Activated CD4-positive, alpha-beta memory T cell treated with anti-CD3 and anti-CD28 coated beads, Interleukin-2, amount 10 ng/mL, durations not matched to agents 7 days and 5 days (primary cell): ENCODE measurements at regions of chr6 and their contacts with region 1.

Region 1: GRCh38 chr6:24899997-24900325 is 35.8 kb downstream of the RIPOR2 start:
- DNase-seq: peak; percentile 21
- H3K4me3 Mint-ChIP-seq: no peak overlapping the region
- H3K27ac Mint-ChIP-seq: peak overlapping the region; percentile 62
- H3K4me1 Mint-ChIP-seq: peaks cover 66% of the 10 kb centered on the region
- H3K27me3 Mint-ChIP-seq: no peaks in the 10 kb centered on the region

Region 2: DNA sequence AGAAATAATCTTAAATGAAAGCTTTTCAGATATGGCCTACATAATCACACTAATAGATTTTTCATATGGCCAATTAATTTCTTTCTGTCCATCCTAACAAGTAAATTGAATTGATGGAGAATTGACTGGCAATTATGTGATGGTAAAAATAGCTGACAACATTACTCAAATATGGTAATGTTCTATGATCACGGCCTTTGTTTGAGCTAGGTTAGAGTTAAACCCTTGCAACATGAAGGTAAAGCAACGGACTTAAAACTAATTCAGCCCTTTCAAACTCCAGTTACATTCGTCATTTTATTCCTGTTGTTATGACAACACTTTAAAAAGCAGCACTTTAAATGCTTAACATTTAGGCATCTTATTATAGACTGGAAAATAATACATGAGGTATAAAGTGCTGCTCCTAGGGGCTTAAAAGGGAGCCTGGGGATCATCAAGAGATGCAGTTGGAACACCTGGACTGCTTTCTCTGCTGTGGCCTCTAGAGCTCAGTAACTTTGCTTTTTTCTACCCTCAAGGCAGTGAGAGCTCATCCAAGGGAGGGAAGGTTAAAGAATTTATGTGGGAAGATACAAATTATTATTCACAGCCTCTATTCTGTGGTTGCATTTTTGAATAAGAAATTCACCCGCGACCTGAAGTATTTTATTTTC is 11.1 kb before region 1 on chr6:
- CTCF ChIA-PET with region 1: interaction called, 5 read pairs
- POLR2A ChIA-PET with region 1: interaction called, 21 read pairs
- DNase-seq: no peak
- H3K4me3 Mint-ChIP-seq: no peak overlapping the region
- H3K27ac Mint-ChIP-seq: no peak overlapping the region
- H3K4me1 Mint-ChIP-seq: peaks cover 66% of the 10 kb centered on the region
- H3K27me3 Mint-ChIP-seq: no peaks in the 10 kb centered on the region